IMR-90 (cell line): ENCODE measurements at regions of chr7 and their contacts with region 1.

Region 1: GRCh38 chr7:44065436-44066118 is at the start of gene PGAM2:
- DNase-seq: no peak
- ATAC-seq: peak; percentile 53
- H3K4me3 ChIP-seq: no peak within 1 kb of the TSS
- H3K27ac ChIP-seq: no peak within 1 kb of the TSS
- H3K4me1 ChIP-seq: peaks cover 9% of the 10 kb centered on the region
- H3K27me3 ChIP-seq: no peaks in the 10 kb centered on the region
- CTCF ChIP-seq: no peak
- POLR2A ChIP-seq: no peak; the same call in none of the 2 replicates
- RAD21 ChIP-seq: no peak
- total RNA-seq, gene PGAM2: not detected in 2 replicates

Region 2: DNA sequence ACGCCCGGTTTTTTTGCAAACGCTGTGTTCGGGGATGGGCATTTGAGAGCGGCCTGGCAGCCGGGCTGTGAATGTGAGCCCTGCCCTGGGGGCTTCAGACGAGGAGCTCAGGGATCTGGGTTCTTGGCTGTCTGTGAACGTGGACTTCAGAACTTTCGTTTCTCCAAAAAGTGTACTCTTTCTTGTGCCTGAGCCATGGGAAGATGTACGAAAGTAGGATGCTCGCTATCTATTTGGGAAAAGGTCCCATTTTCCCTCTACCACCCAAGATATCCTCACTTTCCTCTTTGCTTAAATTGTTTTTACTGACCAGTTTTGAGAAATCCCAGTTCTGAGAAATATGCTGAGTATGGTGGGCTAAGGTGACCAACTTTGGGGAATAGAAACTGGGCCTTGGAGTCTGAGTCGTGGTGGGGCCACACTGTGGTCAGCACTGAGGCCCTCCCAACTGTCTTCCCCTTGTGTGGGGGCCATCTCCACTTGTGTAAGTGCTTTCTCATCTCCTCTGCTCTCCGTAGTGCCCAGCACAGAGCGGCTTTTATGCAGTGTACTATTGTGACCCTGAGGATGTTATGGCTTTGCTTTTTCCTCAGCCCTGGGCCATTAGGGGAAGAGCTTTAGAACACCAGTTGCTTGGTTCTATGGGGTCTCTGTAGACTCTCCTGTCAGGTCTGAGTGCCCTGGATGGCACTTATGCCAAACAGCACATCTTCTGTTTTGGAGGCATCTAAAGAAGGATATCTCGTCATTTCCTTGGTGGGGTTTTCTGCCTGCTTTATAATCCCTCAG is 20.2 kb before region 1 on chr7:
- CTCF ChIA-PET with region 1: no interaction called
- POLR2A ChIA-PET with region 1: interaction called, 19 read pairs
- dilution Hi-C with region 1: no loop called
- in situ Hi-C with region 1: no loop called
- intact Hi-C with region 1: no loop called
- DNase-seq: no peak
- ATAC-seq: peak; percentile 68; the same call in 1 of the 2 replicates
- H3K4me3 ChIP-seq: peak overlapping the region; percentile 79
- H3K27ac ChIP-seq: peak overlapping the region; percentile 82
- H3K4me1 ChIP-seq: peaks cover 8% of the 10 kb centered on the region
- H3K27me3 ChIP-seq: no peaks in the 10 kb centered on the region
- CTCF ChIP-seq: no peak
- POLR2A ChIP-seq: no peak
- RAD21 ChIP-seq: no peak

Region 3: DNA sequence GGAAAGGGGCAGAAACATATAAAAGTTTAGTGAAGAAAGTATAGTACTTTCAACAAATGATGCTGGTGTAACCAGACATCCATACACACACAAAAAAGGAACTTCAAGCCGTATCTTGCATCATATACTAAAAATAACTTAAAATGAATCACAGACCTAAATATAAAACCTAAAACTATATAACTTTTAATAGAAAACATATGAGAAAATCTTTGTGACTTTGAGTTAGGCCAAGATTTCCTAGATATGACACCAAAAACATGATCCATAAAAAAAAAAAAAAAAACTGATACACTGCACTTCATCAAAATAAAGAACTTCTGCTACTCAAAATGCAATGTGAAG is 384.0 kb after region 1 on chr7:
- CTCF ChIA-PET with region 1: no interaction called
- POLR2A ChIA-PET with region 1: no interaction called
- dilution Hi-C with region 1: no loop called
- in situ Hi-C with region 1: no loop called
- intact Hi-C with region 1: no loop called
- DNase-seq: peak; percentile 70
- ATAC-seq: peak; percentile 21; the same call in 1 of the 2 replicates
- H3K4me3 ChIP-seq: no peak overlapping the region
- H3K27ac ChIP-seq: no peak overlapping the region
- H3K4me1 ChIP-seq: peaks cover 3% of the 10 kb centered on the region; the same call in 1 of the 2 replicates
- H3K27me3 ChIP-seq: no peaks in the 10 kb centered on the region
- CTCF ChIP-seq: no peak
- POLR2A ChIP-seq: no peak
- RAD21 ChIP-seq: no peak